ENCODE measurements at regions of chr15 and their contacts with region 1.

Region 1: DNA sequence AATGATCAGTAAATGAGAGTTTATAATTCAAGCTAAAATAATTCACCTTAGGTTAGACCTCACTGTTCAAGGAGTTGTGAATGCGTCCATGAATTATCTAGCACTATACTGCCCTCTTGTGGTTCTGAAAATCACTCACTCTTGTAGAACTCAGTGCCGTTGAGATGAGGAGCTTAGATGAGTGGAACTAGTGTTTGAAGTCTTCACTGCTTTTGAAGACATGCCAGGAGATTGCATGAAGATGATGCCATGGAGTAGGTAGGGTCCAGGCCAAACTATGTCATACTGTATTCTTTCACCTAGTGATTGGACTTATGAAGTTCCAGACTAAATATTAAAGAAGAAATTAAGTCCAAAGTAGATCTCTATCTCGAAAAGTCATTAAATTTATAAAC is 28.8 kb downstream of the LYSMD4 start:
- DNase-seq: peak; percentile 88
- H3K4me3 Mint-ChIP-seq: no peak overlapping the region
- H3K27ac Mint-ChIP-seq: peak overlapping the region; percentile 84
- H3K4me1 Mint-ChIP-seq: peaks cover 43% of the 10 kb centered on the region
- H3K27me3 Mint-ChIP-seq: no peaks in the 10 kb centered on the region
- CTCF ChIP-seq: peak; percentile 57

Region 2: DNA sequence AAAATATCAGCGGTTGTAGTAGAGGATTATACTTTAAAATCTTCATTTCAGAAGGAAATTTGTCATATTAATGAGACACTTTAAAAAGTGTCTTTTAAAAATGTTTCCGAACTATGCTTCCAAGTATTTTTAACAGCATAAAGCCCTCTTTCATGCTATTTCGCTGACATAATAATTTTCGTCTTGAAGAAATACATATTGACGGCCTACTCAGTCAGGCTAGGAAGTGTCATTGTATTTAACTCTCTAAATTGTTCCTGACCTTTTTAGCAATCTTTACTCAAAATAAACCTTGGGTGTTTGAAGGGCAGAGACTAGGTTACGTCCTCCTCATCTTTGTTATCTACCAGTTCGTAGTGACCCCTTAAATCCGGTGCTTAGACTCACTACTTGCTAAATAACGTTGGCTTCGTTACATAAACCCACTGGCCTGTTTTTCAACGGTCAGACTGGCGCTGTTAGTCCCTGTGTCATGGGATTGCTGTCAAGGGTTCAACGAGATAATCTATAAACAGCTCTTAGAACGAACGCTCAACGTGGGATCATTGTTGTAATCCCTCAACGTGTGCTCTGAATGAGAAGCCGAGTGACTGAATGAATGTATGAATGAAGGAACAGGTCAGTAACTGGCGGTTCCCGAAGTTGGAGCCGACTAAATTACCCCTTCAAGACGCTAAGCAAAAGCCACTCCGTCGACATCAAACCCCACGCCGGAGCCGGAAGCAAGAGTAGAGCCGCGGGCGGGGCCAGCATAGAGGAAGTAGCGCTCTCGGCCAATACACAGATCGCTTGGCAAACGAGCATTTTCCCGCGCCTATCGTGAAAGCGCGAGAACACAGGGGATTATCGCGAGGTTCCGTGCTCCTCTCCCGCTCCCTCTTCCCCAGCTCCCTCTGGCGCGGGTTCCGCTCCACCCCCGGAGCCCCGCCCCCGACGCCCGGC is 453.7 kb before region 1 on chr15:
- CTCF ChIA-PET with region 1: interaction called, 7 read pairs
- POLR2A ChIA-PET with region 1: interaction called, 20 read pairs
- intact Hi-C with region 1: no loop called
- DNase-seq: peak; percentile 98
- H3K4me3 Mint-ChIP-seq: no peak overlapping the region
- H3K27ac Mint-ChIP-seq: no peak overlapping the region
- H3K4me1 Mint-ChIP-seq: peaks cover 23% of the 10 kb centered on the region
- H3K27me3 Mint-ChIP-seq: no peaks in the 10 kb centered on the region
- CTCF ChIP-seq: no peak

Region 3: DNA sequence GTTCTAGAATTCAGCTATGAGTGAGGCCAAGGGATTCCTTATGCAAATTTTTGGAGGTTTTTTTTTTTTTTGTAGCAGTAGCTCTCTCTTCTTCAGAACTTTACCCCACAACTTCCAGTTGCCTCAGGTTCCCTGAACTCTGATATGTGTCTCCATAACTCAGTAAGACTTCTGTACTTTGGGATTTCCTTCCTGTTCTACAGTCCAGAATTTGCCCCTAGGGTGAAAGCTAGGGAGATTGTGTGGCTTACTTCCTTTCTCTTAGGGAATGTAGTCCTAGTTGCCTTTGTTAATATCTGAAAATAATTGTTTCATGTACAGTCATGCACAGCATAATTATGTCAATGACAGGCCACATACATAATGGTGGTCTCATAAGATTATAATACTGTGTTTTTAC is 422.3 kb before region 1 on chr15:
- CTCF ChIA-PET with region 1: interaction called, 43 read pairs
- POLR2A ChIA-PET with region 1: interaction called, 11 read pairs
- intact Hi-C with region 1: loop called (anchors 1 kb)
- DNase-seq: no peak
- H3K4me3 Mint-ChIP-seq: no peak overlapping the region
- H3K27ac Mint-ChIP-seq: no peak overlapping the region
- H3K4me1 Mint-ChIP-seq: no peaks in the 10 kb centered on the region
- H3K27me3 Mint-ChIP-seq: no peaks in the 10 kb centered on the region
- CTCF ChIP-seq: no peak

Region 4: DNA sequence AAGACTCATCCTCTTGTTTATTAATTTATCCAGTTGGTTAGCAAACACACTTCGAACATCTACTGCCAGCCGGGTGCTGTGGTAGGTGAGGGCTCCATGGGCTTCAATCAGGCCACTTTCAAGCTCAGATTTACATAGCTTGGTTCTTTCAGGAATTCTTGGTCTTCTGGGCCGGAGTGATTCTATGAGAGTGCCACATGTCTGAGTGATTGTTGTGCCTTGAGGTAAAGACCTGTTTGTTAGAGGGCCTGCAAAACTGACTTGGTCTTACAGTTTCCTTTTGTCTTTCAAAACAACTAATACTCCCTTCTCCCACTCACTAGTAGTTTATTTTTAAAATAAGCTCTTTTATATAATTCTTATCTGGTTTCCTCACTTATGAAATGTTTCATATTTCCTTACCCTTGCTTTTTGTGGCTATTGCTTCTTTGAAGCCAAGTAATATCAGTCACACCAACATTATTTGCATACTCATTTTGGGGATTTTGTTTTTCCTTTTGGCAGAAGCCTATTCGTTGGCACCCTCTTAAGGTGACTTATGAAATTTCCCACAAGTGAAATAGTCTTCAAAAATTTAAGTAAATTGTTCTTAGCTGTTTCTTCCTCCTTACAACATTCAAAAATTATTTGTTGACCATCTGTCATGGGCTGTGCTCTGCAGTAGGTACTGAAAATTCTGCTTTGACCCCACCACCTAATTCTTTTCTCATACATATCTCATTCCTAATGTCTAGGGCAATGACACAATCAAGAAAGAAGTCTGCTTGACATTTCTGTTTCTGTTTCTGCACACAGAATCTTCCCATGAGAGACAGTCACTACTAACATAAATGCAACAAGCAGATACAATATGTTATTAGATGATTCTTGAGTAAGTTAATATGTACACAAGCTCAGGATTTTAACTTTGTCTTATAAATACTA is 333.0 kb before region 1 on chr15:
- CTCF ChIA-PET with region 1: interaction called, 32 read pairs
- POLR2A ChIA-PET with region 1: interaction called, 5 read pairs
- intact Hi-C with region 1: loop called (anchors 2 kb)
- DNase-seq: peak; percentile 11
- H3K4me3 Mint-ChIP-seq: no peak overlapping the region
- H3K27ac Mint-ChIP-seq: peak overlapping the region; percentile 90
- H3K4me1 Mint-ChIP-seq: peaks cover 8% of the 10 kb centered on the region
- H3K27me3 Mint-ChIP-seq: no peaks in the 10 kb centered on the region
- CTCF ChIP-seq: peak; percentile 24

Region 5: DNA sequence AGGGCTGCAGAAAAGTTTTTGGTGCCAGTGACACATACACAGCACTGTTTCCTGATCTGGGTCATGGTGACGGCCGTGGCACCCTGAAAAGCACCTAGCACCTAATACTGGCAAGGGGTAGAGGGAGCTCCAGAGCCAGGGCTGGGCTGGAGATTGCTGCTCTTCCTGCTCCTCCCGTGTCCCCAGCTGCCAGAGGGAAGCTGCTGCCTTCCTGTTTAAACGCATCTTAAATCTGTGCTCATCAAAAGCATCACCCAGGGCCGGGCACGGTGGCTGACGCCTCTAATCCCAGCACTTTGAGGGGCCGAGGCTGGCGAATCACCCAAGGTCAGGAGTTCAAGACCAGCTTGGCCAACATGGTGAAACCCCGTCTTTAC is 295.4 kb before region 1 on chr15:
- CTCF ChIA-PET with region 1: interaction called, 68 read pairs
- POLR2A ChIA-PET with region 1: interaction called, 17 read pairs
- intact Hi-C with region 1: loop called (anchors 1 kb)
- DNase-seq: peak; percentile 74
- H3K4me3 Mint-ChIP-seq: no peak overlapping the region
- H3K27ac Mint-ChIP-seq: no peak overlapping the region
- H3K4me1 Mint-ChIP-seq: peaks cover 12% of the 10 kb centered on the region
- H3K27me3 Mint-ChIP-seq: no peaks in the 10 kb centered on the region
- CTCF ChIP-seq: peak; percentile 56

Region 6: DNA sequence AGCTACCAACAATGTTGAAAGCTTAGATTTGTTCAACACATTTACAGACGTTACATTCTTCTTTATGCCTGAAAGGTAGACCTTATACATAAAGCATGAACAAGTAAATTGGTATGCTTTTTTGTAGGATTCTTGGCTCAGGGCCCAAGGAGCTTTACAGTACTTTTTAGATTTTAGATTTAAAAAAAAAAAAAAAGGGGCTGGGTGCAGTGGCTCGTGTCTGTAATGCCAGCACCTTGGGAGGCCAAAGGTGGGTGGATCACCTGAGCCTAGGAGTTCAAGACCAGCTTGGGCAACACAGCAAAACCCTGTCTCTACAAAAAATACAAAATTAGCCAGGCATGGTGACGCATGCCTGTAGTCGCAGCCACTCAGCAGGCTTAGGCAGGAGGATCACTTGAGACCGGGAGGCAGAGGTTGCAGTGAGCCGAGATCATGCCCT is 98.9 kb before region 1 on chr15:
- CTCF ChIA-PET with region 1: interaction called, 3 read pairs
- POLR2A ChIA-PET with region 1: interaction called, 15 read pairs
- intact Hi-C with region 1: no loop called
- DNase-seq: peak; percentile 84
- H3K4me3 Mint-ChIP-seq: peak overlapping the region; percentile 77
- H3K27ac Mint-ChIP-seq: peak overlapping the region; percentile 95
- H3K4me1 Mint-ChIP-seq: peaks cover 34% of the 10 kb centered on the region
- H3K27me3 Mint-ChIP-seq: no peaks in the 10 kb centered on the region
- CTCF ChIP-seq: no peak

Region 7: GRCh38 chr15:99755692-99756409 is 51.4 kb after region 1 on chr15:
- CTCF ChIA-PET with region 1: interaction called, 37 read pairs
- POLR2A ChIA-PET with region 1: interaction called, 11 read pairs
- intact Hi-C with region 1: loop called (anchors 1 kb)
- DNase-seq: peak; percentile 72
- H3K4me3 Mint-ChIP-seq: no peak overlapping the region
- H3K27ac Mint-ChIP-seq: no peak overlapping the region
- H3K4me1 Mint-ChIP-seq: peaks cover 5% of the 10 kb centered on the region
- H3K27me3 Mint-ChIP-seq: no peaks in the 10 kb centered on the region
- CTCF ChIP-seq: peak; percentile 82

Region 8: DNA sequence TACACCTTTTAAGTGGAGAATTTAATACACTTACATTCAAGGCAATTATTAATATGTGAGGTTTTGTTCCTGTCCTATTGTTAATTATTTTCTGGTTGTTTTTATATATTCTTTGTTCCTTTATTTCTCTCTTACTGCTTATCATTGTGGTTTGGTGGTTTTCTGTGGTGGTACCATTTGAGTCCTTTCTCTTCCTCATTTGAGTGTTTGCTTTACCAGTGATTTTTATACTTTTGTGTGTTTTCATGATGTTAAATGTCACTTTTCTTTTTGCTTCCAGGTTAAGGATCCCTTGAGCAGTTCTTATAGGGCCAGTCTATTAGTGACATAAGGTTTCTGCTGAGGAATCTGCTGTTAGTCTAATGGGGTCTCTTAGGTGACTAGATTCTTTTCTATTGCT is 1331.2 kb after region 1 on chr15:
- CTCF ChIA-PET with region 1: no interaction called
- POLR2A ChIA-PET with region 1: no interaction called
- intact Hi-C with region 1: no loop called
- DNase-seq: no peak
- H3K4me3 Mint-ChIP-seq: no peak overlapping the region
- H3K27ac Mint-ChIP-seq: no peak overlapping the region
- H3K4me1 Mint-ChIP-seq: no peaks in the 10 kb centered on the region
- H3K27me3 Mint-ChIP-seq: no peaks in the 10 kb centered on the region
- CTCF ChIP-seq: no peak

Measured in MCF 10A (cell line).